PC-3 (cell line): ENCODE measurements at regions of chr14 and their contacts with region 1.

Region 1: GRCh38 chr14:54366736-54367735 is 29.8 kb upstream of the CDKN3 start:
- DNase-seq: peak; percentile 88
- ATAC-seq: peak; percentile 71
- H3K4me3 ChIP-seq: no peak overlapping the region
- H3K27ac ChIP-seq: no peak overlapping the region
- H3K4me1 ChIP-seq: peaks cover 60% of the 10 kb centered on the region
- H3K27me3 ChIP-seq: no peaks in the 10 kb centered on the region
- CTCF ChIP-seq: peak; percentile 98

Region 2: GRCh38 chr14:54147282-54147681 is 219.8 kb before region 1 on chr14:
- CTCF ChIA-PET with region 1: no interaction called
- POLR2A ChIA-PET with region 1: no interaction called
- intact Hi-C with region 1: no loop called
- DNase-seq: peak; percentile 94
- ATAC-seq: peak; percentile 81
- H3K4me3 ChIP-seq: no peak overlapping the region
- H3K27ac ChIP-seq: no peak overlapping the region
- H3K4me1 ChIP-seq: peaks cover 8% of the 10 kb centered on the region; the same call in 1 of the 2 replicates
- H3K27me3 ChIP-seq: no peaks in the 10 kb centered on the region
- CTCF ChIP-seq: no peak

Region 3: GRCh38 chr14:54396493-54397335 is 29.7 kb after region 1 on chr14 and contains the start of gene CDKN3:
- CTCF ChIA-PET with region 1: interaction called, 13 read pairs
- POLR2A ChIA-PET with region 1: interaction called, 5 read pairs
- intact Hi-C with region 1: loop called (anchors 1 kb)
- DNase-seq: peak; percentile 100
- ATAC-seq: peak; percentile 95
- H3K4me3 ChIP-seq: peak within 1 kb of the TSS; percentile 90
- H3K27ac ChIP-seq: peak within 1 kb of the TSS; percentile 39
- H3K4me1 ChIP-seq: peaks cover 24% of the 10 kb centered on the region
- H3K27me3 ChIP-seq: no peaks in the 10 kb centered on the region
- CTCF ChIP-seq: peak; percentile 54; the same call in 1 of the 2 replicates
- total RNA-seq, gene CDKN3: 354 and 434 TPM in 2 replicates

Region 4: DNA sequence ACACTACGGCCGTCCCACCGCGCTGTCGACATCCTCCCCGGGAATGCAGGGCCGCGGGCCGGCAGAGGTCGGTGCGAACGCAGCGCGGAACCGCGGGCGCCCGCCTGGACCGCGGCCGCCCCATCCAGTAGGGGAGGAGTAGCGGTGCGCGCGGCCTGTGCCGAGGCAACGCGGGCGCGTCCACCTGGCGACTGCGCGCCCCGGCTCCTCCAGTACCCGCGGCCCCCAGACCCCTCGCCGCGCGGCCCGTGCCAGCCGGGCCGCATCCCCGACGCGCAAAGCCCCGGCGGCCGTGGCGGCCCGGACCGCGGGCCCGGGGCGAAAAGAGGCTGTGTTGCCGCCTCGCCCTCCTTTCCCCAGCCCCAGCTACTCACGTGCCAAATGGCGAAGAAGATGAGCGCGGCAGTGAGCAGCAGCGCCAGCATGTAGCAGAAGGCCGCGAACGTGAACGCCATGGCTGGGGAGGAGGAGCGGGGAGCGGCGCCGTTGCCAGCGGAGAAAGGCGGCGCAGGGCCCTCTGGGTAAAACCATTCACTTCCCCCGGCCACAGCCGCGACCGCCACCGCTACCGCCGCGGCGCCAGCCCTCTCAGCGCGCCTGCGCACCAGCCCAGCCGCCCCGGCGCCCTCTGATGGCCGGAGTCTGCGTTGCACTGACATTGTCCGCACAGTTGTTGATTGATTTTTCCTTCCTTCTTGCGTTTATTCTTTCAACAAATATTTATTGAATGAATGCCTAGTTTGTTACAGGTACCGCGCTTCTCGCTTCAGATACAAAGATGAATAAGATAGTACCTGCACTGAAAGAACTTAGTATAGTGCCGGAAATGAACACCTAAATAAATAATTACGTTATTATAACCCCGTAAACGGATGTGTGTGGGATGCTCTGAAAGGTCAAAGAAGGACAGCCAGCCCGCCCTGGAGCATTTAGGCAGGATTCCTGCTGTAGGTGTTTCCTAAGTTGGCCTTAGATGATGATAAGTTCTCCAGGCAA is 74.1 kb after region 1 on chr14 and contains the start of gene CNIH1:
- CTCF ChIA-PET with region 1: no interaction called
- POLR2A ChIA-PET with region 1: no interaction called
- intact Hi-C with region 1: loop called (anchors 1 kb)
- DNase-seq: peak; percentile 99
- ATAC-seq: peak; percentile 95
- H3K4me3 ChIP-seq: peak within 1 kb of the TSS; percentile 74
- H3K27ac ChIP-seq: peak within 1 kb of the TSS; percentile 74
- H3K4me1 ChIP-seq: peaks cover 52% of the 10 kb centered on the region
- H3K27me3 ChIP-seq: no peaks in the 10 kb centered on the region
- CTCF ChIP-seq: peak; percentile 99
- total RNA-seq, gene CNIH1: 139 and 194 TPM in 2 replicates

Region 5: DNA sequence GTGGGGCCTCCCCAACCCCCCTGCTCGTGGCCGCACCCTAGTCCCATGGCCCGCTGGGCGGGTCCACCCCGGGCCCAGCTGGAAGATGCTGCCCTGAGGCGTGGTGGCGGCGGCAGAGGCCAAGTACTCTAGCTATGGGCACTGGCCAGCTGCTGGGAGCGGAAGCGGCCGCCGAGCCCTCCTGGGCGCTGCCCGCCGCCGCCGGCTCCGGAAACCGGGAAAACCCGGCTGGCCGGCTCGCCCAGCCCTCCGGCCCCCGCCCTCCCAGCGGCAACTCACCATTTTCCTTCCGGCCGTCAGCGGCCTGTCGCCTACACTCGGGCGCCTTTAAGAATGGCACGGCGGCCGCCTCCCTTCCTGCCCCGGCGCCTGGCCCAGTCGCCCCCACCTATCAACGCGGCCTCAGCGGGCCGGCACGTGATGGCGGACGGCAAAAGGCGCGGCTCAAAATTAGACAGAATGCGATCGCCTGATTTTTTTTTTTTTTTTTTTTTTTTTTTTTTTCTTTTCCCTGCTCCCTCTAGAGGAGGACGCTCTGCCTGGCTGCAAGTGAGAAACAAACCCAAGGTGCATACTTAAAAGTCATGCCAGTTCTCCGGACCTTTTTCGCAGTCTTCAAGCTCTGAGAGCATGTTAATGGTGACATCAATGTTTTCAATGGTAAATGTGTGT is 121.7 kb after region 1 on chr14 and contains the start of gene GMFB:
- CTCF ChIA-PET with region 1: interaction called, 4 read pairs
- POLR2A ChIA-PET with region 1: interaction called, 3 read pairs
- intact Hi-C with region 1: loop called (anchors 1 kb)
- DNase-seq: peak; percentile 99
- ATAC-seq: peak; percentile 91
- H3K4me3 ChIP-seq: peak within 1 kb of the TSS; percentile 80
- H3K27ac ChIP-seq: peak within 1 kb of the TSS; percentile 86
- H3K4me1 ChIP-seq: peaks cover 42% of the 10 kb centered on the region
- H3K27me3 ChIP-seq: no peaks in the 10 kb centered on the region
- CTCF ChIP-seq: peak; percentile 68
- total RNA-seq, gene GMFB: 45.2 and 85.2 TPM in 2 replicates

Region 6: GRCh38 chr14:55671641-55672040 is 1304.6 kb after region 1 on chr14:
- CTCF ChIA-PET with region 1: no interaction called
- POLR2A ChIA-PET with region 1: no interaction called
- intact Hi-C with region 1: no loop called
- DNase-seq: no peak
- ATAC-seq: no peak
- H3K4me3 ChIP-seq: no peak overlapping the region
- H3K27ac ChIP-seq: no peak overlapping the region
- H3K4me1 ChIP-seq: no peaks in the 10 kb centered on the region
- H3K27me3 ChIP-seq: no peaks in the 10 kb centered on the region
- CTCF ChIP-seq: no peak